ENCODE measurements at regions of chr19 and their contacts with region 1.

Region 1: DNA sequence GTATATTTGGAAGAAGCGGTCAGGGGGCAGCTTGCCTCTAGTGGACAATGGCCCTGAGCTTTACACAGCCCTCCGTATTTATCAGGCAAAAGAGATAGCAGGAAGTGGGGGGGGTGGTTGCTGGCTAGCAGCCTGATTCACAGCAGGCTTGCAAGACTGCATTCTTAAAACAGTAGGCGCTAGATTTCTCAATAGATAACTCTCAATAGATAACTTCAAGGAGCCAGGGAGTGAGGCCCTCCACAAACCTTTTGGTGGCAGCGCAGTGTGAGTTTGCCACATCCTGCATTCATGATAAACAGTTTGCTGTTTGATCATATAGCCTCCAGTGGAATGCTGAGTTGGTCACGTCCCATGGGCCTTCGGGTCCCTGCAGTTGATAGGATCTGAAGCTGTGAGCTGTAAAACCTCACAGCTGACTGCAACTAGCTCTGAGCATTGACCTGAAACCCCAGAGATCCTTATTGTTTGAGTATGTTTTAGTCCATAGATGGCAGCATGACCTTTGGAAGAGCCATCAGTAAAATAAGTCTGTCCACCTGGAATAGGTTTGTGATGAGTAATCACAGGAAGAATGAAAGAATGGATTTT is 12.2 kb downstream of the FPR3 start:
- DNase-seq: peak; percentile 89
- ATAC-seq: peak; percentile 64
- H3K4me3 ChIP-seq: no peak overlapping the region
- H3K27ac ChIP-seq: peak overlapping the region; percentile 75
- H3K4me1 ChIP-seq: peaks cover 53% of the 10 kb centered on the region
- H3K27me3 ChIP-seq: no peaks in the 10 kb centered on the region
- CTCF ChIP-seq: peak; percentile 46

Region 2: DNA sequence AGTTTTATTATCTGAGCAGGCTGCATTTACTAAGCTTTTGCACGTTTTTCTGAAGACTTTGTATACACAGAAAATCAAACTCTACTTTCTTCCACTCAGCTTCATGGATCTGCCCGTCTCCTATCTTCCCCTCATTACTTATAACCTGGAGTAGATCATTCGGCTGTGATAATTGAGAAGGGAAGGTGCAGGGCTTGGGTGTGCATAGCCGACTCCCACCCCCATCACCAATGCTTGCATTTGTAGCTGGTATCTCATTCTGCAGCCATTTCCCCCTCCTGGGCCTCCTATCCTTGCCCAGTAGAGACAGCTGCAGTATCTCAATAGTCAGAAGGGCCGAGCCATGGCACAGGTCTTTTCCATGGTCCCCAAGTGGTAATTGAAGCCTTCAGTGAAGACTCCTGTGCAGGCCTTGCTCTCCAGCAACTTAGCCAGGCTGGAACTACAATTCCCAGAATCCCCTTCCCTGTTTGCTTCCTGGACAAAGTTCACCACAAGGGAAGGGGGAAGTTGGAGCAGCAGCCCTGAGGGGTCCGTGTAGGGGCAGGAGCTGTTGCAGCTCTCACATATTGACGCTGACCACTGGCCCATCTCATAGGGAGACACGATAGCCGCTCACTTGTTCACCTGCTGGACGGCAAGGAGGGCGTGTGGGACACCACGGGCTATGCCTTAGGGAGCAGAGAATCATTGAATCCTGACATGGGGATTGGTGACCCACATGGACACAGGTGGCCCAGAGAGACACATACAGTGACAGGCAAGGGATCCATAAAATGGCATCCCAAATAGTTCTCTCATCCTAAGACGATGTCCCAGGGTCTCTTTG is 346.8 kb before region 1 on chr19:
- CTCF ChIA-PET with region 1: no interaction called
- POLR2A ChIA-PET with region 1: no interaction called
- intact Hi-C with region 1: no loop called
- DNase-seq: peak; percentile 20
- ATAC-seq: no peak
- H3K4me3 ChIP-seq: no peak overlapping the region
- H3K27ac ChIP-seq: no peak overlapping the region
- H3K4me1 ChIP-seq: no peaks in the 10 kb centered on the region
- H3K27me3 ChIP-seq: peaks cover 61% of the 10 kb centered on the region
- CTCF ChIP-seq: no peak

Region 3: GRCh38 chr19:51712460-51713083 is 94.6 kb before region 1 on chr19:
- CTCF ChIA-PET with region 1: interaction called, 3 read pairs
- POLR2A ChIA-PET with region 1: interaction called, 4 read pairs
- intact Hi-C with region 1: loop called (anchors 1 kb)
- DNase-seq: peak; percentile 85
- ATAC-seq: peak; percentile 76
- H3K4me3 ChIP-seq: no peak overlapping the region
- H3K27ac ChIP-seq: no peak overlapping the region
- H3K4me1 ChIP-seq: no peaks in the 10 kb centered on the region
- H3K27me3 ChIP-seq: peaks cover 3% of the 10 kb centered on the region; the same call in 1 of the 2 replicates
- CTCF ChIP-seq: peak; percentile 90

Region 4: DNA sequence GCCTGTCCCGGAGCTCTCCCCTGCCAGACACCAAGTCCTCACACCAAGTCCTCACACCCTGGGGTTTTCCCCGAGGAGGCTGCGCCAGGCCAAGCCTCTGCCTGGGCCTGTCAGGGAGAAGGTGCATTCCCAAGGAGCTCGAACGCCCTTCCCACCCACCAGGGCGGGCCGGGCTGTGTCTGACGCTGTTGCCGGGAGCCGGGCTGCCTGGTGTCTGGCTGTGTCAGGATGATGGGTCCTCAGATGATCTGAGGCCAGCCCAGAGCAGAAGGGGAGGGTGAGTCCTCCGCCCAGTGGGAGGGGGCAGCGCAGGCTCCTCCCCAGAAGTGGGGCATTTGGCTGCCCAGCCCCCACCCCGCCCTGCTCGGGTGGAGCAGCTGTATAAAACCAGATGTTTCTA is 81.2 kb before region 1 on chr19:
- CTCF ChIA-PET with region 1: no interaction called
- POLR2A ChIA-PET with region 1: interaction called, 18 read pairs
- intact Hi-C with region 1: no loop called
- DNase-seq: no peak
- ATAC-seq: peak; percentile 58
- H3K4me3 ChIP-seq: no peak overlapping the region
- H3K27ac ChIP-seq: no peak overlapping the region
- H3K4me1 ChIP-seq: peaks cover 6% of the 10 kb centered on the region; the same call in 1 of the 2 replicates
- H3K27me3 ChIP-seq: peaks cover 33% of the 10 kb centered on the region
- CTCF ChIP-seq: no peak

Region 5: GRCh38 chr19:51771376-51772130 is 35.7 kb before region 1 on chr19:
- CTCF ChIA-PET with region 1: no interaction called
- POLR2A ChIA-PET with region 1: no interaction called
- intact Hi-C with region 1: no loop called
- DNase-seq: no peak
- ATAC-seq: no peak
- H3K4me3 ChIP-seq: no peak overlapping the region
- H3K27ac ChIP-seq: no peak overlapping the region
- H3K4me1 ChIP-seq: no peaks in the 10 kb centered on the region
- H3K27me3 ChIP-seq: peaks cover 33% of the 10 kb centered on the region; the same call in 1 of the 2 replicates
- CTCF ChIP-seq: no peak